PC-3 (cell line): ENCODE measurements at regions of chr14 and their contacts with region 1.

Region 1: GRCh38 chr14:49959822-49960408 is 67.0 kb downstream of the ARF6 start:
- DNase-seq: no peak
- ATAC-seq: no peak
- H3K4me3 ChIP-seq: no peak overlapping the region
- H3K27ac ChIP-seq: no peak overlapping the region
- H3K4me1 ChIP-seq: peaks cover 30% of the 10 kb centered on the region
- H3K27me3 ChIP-seq: no peaks in the 10 kb centered on the region
- CTCF ChIP-seq: no peak

Region 2: DNA sequence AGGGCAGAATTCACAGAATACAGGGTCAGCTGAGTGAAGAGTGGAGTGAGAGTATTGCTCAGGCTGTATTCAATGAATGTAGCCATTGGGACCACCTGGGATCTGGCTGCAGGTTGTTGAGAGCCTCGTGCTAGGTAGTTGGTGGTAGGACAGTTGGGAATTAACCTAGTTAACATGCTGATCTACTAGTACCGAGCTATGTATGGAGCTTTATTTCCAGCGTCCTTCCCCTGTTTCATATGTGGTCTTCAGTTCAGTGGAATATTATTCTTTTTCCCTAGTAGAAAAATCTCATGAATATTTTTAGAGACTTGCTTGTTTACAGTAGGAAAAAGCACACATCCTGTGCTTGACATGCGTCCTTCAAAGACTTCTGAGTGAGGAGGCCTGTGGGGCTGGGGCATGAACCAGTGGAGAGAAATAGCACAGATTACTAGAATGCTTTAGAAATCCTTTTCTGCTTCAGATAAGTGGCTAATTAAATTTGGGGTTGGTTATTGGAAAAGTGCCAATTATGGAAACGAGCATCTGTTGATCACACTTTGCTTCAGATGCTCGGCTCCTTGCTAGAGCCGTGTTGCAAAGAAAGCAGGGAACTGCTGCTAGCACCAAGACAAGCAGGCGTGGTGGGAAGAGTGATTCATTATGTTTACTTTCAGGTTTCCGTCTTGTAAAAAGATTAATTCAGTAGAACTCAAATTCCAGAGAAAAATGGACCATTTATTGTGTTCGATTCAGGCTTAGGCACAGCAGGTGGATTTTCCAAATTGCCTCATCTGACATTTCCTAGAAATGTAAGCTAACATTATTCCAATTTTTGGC is 13.4 kb before region 1 on chr14:
- CTCF ChIA-PET with region 1: no interaction called
- POLR2A ChIA-PET with region 1: interaction called, 7 read pairs
- intact Hi-C with region 1: loop called (anchors 1 kb)
- DNase-seq: peak; percentile 93
- ATAC-seq: peak; percentile 82
- H3K4me3 ChIP-seq: peak overlapping the region; percentile 23; the same call in 1 of the 2 replicates
- H3K27ac ChIP-seq: peak overlapping the region; percentile 65
- H3K4me1 ChIP-seq: peaks cover 50% of the 10 kb centered on the region
- H3K27me3 ChIP-seq: no peaks in the 10 kb centered on the region
- CTCF ChIP-seq: no peak

Region 3: GRCh38 chr14:50109342-50109741 is 149.4 kb after region 1 on chr14:
- CTCF ChIA-PET with region 1: no interaction called
- POLR2A ChIA-PET with region 1: no interaction called
- intact Hi-C with region 1: loop called (anchors 1 kb)
- DNase-seq: peak; percentile 38
- ATAC-seq: peak; percentile 16; the same call in 1 of the 2 replicates
- H3K4me3 ChIP-seq: no peak overlapping the region
- H3K27ac ChIP-seq: no peak overlapping the region
- H3K4me1 ChIP-seq: peaks cover 10% of the 10 kb centered on the region
- H3K27me3 ChIP-seq: no peaks in the 10 kb centered on the region
- CTCF ChIP-seq: peak; percentile 62

Region 4: DNA sequence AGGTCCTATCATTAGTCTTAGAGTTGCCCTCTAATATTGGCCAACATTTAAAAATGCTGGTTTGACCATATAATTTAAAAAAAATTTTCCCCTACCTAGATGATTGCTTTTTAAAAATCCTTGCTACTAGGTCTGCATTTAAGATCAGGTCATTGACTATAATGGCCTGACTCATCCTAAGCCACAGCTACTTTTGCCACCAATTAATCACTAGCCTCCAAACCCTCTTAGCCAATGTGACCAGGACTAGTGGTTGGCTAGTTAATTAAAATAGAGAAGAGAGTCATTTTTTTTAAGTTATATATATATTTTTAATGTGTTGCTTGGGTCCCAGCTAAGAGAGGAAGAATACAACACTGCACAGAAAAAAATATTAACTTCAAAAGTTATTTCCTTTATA is 214.0 kb after region 1 on chr14:
- CTCF ChIA-PET with region 1: no interaction called
- POLR2A ChIA-PET with region 1: no interaction called
- intact Hi-C with region 1: no loop called
- DNase-seq: peak; percentile 35
- ATAC-seq: peak; percentile 85
- H3K4me3 ChIP-seq: no peak overlapping the region
- H3K27ac ChIP-seq: no peak overlapping the region
- H3K4me1 ChIP-seq: no peaks in the 10 kb centered on the region
- H3K27me3 ChIP-seq: no peaks in the 10 kb centered on the region
- CTCF ChIP-seq: no peak

Region 5: DNA sequence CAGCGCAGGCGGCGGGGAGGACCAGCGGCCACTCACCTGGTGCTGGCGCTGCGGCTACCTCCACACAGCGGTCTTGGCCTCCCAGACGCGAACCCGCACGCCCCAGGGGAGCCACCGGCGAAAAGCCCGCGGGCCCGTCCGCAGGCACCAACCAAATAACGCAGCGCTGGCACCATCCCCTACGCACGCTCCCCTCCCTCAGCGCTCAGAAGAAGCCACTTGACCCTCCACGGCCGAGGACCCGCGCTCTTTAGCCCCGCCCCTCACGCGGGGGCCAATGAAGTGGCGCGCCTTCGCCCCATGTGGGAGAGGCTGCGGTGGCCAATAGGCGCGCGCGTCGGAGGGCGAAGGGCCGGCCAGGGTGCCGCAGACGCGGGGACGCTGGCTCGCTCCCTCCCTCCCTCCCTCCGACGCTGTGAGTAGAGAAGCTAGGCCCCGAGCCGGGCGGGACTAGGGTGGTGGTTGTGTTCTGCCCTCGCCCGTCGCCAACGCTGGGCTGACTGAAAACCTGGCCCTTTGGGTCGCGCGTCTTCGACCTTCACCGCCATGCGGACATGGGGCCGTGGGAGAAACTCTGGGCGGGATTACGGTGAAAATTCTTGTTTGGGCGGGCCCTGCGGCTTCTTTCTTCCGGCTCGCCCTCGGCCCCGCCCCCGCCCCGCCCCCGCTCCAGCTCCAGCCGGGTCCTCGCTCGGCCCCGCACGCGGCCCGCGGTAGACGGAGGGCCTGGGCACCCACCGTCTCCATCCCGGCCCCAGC is 352.2 kb after region 1 on chr14 and contains the starts of genes DMAC2L and L2HGDH:
- CTCF ChIA-PET with region 1: interaction called, 17 read pairs
- POLR2A ChIA-PET with region 1: no interaction called
- intact Hi-C with region 1: no loop called
- DNase-seq: peak; percentile 98
- ATAC-seq: peak; percentile 91
- H3K4me3 ChIP-seq: peak within 1 kb of the TSS; percentile 93
- H3K27ac ChIP-seq: peak within 1 kb of the TSS; percentile 77
- H3K4me1 ChIP-seq: peaks cover 18% of the 10 kb centered on the region
- H3K27me3 ChIP-seq: no peaks in the 10 kb centered on the region
- CTCF ChIP-seq: peak; percentile 20
- total RNA-seq, gene DMAC2L: 2.3 and 18.1 TPM in 2 replicates
- total RNA-seq, gene L2HGDH: 27.8 and 41.6 TPM in 2 replicates